ENCODE measurements at regions of chr2 and their contacts with region 1.

Region 1: DNA sequence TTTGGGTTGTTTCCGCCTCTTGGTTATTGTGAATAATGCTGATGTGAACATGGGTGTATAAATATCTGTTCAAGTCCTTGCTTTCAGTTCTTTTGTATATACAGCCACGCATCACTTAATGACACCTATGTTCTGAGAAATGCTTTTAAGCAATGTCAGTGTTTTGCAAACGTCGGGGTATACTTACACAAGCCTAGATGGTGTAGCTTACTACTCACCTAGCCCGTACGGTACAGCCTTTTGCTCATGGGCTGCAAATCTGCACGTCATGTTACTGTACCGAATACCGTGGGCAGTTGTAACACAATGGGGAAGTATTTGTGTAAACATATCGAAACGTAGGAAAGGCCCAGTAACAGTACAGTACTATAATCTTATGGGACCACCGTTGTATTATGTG is 12.4 kb downstream of the RALB start:
- DNase-seq: peak in 2 of 3 donors; percentile 91 to 93
- H3K4me3 ChIP-seq: peak overlapping the region in 5 of 7 experiments; percentile 12 to 70 (median 36)
- H3K27ac ChIP-seq: peak overlapping the region in 1 of 2 experiments; percentile 29
- H3K4me1 ChIP-seq: peaks cover 23 to 70% (median 32%) of the 10 kb centered on the region in 4 experiments
- H3K27me3 ChIP-seq: no peaks in the 10 kb centered on the region

Region 2: DNA sequence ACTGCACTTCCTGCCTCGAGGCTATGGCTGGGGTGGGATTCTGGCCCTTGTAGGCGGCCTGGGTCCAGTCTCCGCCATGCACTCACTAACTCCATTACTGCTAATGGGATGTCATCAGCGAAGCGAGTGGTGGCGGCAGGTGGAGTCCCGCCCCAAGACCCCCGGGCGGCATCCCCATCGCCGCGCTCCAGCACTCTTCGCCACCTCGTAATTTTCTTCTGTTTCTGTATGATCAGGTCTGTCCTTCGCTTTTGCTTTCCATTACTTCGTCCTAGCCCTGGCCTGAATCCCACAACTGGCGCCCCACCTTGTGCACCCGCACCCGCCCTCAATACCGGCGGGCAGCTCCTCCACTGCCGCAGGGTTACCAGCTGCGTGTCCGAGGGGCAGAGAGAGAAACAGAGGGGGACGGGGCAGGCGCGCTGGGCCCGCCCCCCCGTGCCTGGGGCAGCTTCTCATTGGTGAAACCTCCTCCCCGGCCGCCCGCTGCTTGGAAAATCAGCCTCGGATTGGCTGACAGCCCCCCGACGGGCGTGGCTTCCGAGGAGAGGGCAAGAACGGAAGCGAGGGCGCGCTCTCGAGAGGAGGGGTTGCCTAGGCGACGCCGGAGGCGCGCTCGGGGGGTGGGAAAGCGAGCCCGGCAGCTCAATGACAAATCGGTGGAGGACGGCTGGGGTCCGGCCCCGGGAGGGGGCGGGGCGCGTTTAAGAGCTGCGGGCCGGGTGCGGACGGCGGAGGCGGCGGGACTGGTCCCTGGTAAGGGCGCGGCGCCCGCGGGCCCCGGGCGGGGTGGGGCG is 12.6 kb before region 1 on chr2 and contains the start of gene RALB:
- CTCF ChIA-PET with region 1: interaction called, 21 read pairs
- POLR2A ChIA-PET with region 1: interaction called, 5 read pairs
- DNase-seq: peak; percentile 97 to 98 (median 98)
- H3K4me3 ChIP-seq: peak within 1 kb of the TSS; percentile 61 to 97 (median 88)
- H3K27ac ChIP-seq: peak within 1 kb of the TSS in 1 of 2 experiments; percentile 69
- H3K4me1 ChIP-seq: peaks cover 36 to 57% (median 48%) of the 10 kb centered on the region in 4 experiments
- H3K27me3 ChIP-seq: no peaks in the 10 kb centered on the region

Measured in common myeloid progenitor, CD34-positive (primary cell).